OCI-LY7 (cell line): ENCODE measurements at regions of chr18 and their contacts with region 1.

Region 1: GRCh38 chr18:6543330-6543908 is 128.7 kb upstream of the L3MBTL4 start:
- DNase-seq: peak; percentile 19
- H3K4me3 ChIP-seq: no peak overlapping the region
- H3K27ac ChIP-seq: no peak overlapping the region
- H3K4me1 ChIP-seq: no peaks in the 10 kb centered on the region
- CTCF ChIP-seq: peak; percentile 76

Region 2: DNA sequence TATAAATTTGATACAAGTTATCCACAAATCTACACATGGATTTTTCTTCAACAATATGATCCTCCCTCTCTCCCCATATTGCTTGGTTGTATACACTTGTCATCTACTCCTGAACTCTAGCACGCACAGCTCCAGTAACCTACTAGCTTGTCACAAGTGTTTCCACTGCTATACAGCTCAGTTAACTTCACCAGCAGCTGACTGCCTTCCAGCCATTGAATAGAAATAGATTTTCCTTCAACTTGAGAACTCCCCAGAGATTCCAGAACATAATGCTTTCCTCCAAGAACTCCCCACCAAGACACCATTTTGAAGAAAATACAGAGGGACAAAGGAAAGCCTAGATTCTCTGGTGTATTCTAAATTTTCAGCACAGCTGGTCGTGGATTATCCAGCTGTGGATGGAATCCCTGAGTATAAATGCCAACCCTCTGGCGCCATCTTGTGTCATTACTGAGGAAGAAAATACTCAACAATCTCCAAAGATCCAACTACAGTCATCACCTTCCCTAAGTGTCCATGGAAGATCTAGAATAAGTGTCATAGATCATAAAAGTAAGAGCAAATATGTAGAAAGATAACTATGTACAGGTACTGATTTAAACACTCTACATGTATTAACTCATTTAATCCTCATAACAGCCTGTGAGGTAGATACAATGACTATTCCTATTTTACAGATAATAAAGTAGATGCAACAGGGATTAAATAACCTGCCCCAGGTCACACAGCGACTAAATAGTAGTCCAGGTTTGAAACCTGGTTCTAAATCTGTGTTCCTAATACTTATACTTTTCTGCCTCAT is 342.8 kb after region 1 on chr18:
- CTCF ChIA-PET with region 1: no interaction called
- POLR2A ChIA-PET with region 1: no interaction called
- intact Hi-C with region 1: loop called (anchors 1 kb)
- DNase-seq: peak; percentile 41
- H3K4me3 ChIP-seq: no peak overlapping the region
- H3K27ac ChIP-seq: no peak overlapping the region
- H3K4me1 ChIP-seq: no peaks in the 10 kb centered on the region
- CTCF ChIP-seq: peak; percentile 86